Posterior vena cava (tissue), 2 donors: ENCODE measurements at regions of chr4 and their contacts with region 1.

Region 1: GRCh38 chr4:38062088-38062893 is 102.1 kb downstream of the PTTG2 start:
- DNase-seq: peak; percentile 89

Region 2: GRCh38 chr4:37615059-37615719 is 447.1 kb before region 1 on chr4:
- intact Hi-C with region 1: loop called in 1 of 2 experiments (anchors 2 kb)
- DNase-seq: no peak

Region 3: GRCh38 chr4:38094419-38094818 is 32.1 kb after region 1 on chr4:
- intact Hi-C with region 1: loop called in 1 of 2 experiments (anchors 1 kb)
- DNase-seq: no peak

Region 4: DNA sequence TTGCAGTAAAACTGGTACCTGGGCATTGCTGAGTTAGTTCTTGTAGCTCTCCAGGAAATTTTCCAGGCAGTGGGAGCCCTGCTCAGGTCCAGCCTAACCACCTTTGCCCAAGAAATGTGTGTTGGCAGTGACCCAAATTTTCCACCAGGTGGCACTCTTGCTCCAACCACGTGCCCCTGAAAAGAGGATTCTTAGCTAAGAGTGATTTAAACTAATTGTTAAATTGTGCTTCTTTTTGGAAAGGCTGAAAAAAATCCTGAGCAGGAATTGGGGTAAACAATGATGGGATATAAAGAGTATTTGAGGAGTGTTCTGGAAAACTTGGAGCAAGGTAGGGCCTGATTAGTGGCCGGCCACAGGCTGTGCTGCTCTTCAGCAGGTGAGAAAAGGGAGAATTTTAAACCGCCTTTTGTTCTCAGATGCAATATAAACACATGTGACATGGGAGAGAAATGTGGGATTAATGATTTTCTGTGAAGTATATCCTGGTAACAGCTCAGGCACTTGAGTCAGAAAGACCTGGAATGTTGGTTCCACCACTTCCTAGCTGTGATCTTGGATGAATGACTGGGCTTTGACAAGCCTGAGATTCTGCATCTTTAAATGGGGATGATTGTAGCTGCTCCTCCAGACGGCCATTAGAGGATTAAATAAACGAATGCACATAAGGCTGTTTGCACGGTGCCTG is 117.5 kb after region 1 on chr4:
- intact Hi-C with region 1: loop called in 1 of 2 experiments (anchors 10 kb)
- DNase-seq: peak; percentile 88

Region 5: GRCh38 chr4:38306482-38307071 is 244.3 kb after region 1 on chr4:
- intact Hi-C with region 1: loop called in 1 of 2 experiments (anchors 10 kb)
- DNase-seq: no peak

Region 6: DNA sequence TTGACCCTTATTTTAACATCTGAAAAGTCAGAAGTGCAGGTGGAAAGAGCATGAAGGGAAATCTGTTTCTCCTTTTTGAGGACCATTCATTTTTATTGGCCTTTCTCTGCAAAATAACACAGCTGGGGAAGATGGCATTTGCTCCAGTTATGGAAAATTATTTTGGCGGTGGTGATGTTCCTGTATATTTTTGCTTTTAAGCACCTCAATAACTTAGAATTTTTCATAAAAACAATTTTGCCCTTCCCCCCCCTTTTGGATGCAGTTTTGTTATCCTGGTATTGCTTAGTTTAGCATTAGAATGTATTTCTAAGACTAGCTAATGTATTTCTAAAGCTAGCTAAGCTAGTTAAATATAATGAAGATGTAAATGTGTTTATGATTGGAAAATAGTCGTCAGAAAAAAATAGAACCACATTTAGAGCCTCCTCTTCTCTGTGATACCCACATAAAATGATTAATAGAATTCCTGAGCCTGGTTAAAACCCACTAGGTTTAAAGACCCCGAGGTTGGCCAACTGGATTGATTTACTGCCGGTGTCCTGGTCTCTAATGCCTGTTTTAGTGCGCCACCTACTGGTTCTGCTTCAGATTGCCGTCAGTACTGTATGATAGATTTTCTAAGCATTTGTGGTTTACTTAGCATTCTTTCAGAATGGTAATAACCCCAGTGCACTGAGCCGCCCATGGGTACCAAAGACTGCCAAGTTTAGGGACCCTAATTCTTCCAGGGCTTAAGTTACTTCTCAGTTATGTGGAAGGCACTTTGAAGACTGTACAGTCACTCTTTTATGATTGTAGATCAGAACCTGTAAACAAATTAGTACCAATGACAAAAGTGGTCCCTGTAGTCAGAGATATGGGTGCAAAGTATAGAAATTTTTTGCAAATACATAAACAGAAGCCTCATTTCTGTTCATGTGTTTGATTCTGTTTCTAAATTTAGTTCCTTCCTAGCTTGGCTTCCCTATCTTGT is 613.1 kb after region 1 on chr4:
- intact Hi-C with region 1: loop called in 1 of 2 experiments (anchors 10 kb)
- DNase-seq: no peak